Activated T-helper 2 cell treated with anti-CD3 and anti-CD28 coated beads, Interferon-gamma antibody, Interleukin-2, Interleukin-4, amounts not matched to agents 10 μg/mL and 5 μg/mL and 100 μg/mL, durations not matched to agents 14 hours and 24 hours and 36 hours (primary cell): ENCODE measurements at regions of chr6 and their contacts with region 1.

Region 1: DNA sequence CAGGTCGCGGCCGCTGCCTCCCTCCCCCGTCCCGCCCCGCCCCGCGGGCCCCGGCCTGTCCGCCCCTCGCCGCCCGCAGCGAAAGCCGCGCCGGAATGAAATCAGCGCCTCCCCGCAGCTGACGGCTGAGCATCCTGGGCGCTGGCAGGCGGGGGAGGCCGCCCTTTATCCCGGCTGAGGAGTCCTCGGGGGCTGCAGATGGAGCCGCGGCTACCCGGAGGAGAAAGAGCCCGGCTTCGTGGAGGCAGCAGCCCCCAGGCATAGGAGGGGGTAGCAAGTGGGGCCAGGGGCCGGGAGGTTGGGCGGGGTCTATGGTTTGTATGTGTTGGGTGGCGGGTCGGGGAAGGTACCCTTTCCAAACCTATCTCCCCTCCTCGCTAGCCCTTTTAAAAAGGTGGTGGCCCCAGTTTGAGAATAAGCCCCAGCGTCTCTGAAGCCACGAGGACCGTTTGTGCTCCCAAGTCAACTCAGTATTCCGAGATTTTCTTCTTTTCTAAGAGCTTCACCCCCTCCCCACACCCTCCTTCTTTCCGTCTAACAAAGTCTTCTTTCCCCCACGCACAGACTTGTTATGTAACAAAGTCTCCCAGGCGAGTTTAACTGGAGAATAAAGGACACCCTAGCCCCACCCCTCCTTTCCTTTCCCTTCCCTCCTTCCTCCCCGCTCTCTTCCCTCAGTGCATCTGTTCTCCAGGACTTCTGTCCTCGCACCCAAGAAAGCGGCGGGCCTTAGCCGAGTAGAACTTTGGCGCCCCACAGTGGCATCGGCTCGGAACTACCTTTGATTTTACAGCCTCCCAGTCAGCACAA is 11.0 kb downstream of the POU3F2 start:
- DNase-seq: peak; percentile 46
- H3K4me3 Mint-ChIP-seq: peak overlapping the region; percentile 18
- H3K27ac Mint-ChIP-seq: no peak overlapping the region
- H3K4me1 Mint-ChIP-seq: peaks cover 11% of the 10 kb centered on the region
- H3K27me3 Mint-ChIP-seq: peaks cover 83% of the 10 kb centered on the region

Region 2: DNA sequence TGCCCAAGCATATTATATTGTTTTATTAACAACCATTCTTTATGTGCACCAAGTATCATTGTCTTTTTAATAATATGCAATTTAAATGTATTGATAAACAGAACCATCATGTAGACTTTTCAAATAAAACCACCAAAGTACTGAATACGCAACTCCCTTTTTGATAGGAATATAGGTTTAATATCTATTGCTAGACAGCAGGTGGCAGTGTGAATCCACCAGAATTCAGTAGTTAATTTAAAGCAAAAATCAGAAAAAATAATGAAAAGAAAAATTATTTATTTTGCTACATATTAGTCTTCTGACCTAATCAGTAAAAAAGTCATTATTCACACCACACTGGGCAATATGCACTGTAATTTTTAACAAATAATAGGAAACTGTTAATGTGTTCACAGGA is 1777.2 kb before region 1 on chr6:
- intact Hi-C with region 1: loop called (anchors 5 kb)
- DNase-seq: no peak
- H3K4me3 Mint-ChIP-seq: no peak overlapping the region
- H3K27ac Mint-ChIP-seq: no peak overlapping the region
- H3K4me1 Mint-ChIP-seq: peaks cover 10% of the 10 kb centered on the region
- H3K27me3 Mint-ChIP-seq: no peaks in the 10 kb centered on the region

Region 3: DNA sequence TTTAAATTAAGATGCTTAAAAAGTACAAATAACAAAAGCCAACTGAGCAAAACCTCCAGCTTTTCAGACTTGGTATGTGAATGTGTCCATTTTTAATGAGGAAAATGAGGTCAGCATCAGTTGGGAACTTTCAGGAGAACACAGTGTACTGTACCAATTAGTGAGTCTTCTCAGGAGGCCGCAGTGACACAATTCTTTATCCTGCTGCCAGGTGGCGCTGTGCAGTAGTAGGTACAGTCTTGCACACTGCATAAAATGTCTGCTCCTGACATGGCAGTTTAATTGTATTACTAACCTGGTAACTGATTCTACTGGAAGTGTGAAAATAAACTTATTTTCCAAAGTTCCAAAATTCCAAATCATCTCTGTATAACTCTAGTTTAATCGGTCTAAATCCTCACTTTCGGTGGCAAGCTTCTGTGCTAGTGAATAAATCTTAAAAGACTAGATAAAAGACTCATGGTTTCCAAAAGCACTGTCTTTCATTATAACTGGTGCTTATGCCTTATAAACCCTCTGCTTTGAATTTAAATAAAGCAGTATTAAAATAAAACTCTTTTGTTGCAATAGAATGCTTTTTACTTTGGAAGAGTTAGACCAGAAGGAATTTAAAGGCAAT is 1347.6 kb before region 1 on chr6:
- intact Hi-C with region 1: loop called (anchors 1 kb)
- DNase-seq: peak; percentile 29
- H3K4me3 Mint-ChIP-seq: no peak overlapping the region
- H3K27ac Mint-ChIP-seq: no peak overlapping the region
- H3K4me1 Mint-ChIP-seq: no peaks in the 10 kb centered on the region
- H3K27me3 Mint-ChIP-seq: peaks cover 11% of the 10 kb centered on the region

Region 4: GRCh38 chr6:98834060-98835031 is 11.1 kb before region 1 on chr6 and contains the start of gene POU3F2:
- intact Hi-C with region 1: loop called (anchors 1 kb)
- DNase-seq: peak; percentile 38
- H3K4me3 Mint-ChIP-seq: peak within 1 kb of the TSS; percentile 77
- H3K27ac Mint-ChIP-seq: no peak within 1 kb of the TSS
- H3K4me1 Mint-ChIP-seq: peaks cover 30% of the 10 kb centered on the region
- H3K27me3 Mint-ChIP-seq: peaks cover 76% of the 10 kb centered on the region
- total RNA-seq, gene POU3F2: not detected in 2 replicates

Region 5: DNA sequence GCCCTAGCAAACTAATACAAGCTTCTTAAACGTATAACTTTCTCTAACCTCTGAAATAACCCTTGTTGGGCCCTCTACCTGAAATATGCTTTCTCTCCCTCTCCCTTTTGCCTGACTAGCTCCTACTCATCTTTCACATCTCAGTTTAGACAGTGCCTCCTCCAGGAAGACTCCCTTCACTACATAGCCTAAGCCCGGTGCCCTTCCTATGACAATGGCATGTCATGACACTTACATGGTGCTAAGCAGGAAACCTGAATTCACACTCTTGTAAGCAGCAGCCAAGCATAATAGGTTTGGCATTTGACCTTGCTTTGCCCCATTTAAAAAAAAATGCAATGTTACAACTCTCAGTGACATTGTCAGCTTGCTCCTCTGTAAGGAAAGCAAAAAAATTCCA is 135.4 kb after region 1 on chr6:
- intact Hi-C with region 1: no loop called
- DNase-seq: no peak
- H3K4me3 Mint-ChIP-seq: no peak overlapping the region
- H3K27ac Mint-ChIP-seq: no peak overlapping the region
- H3K4me1 Mint-ChIP-seq: peaks cover 1% of the 10 kb centered on the region
- H3K27me3 Mint-ChIP-seq: peaks cover 10% of the 10 kb centered on the region

Region 6: GRCh38 chr6:99119109-99120031 is 274.0 kb after region 1 on chr6:
- intact Hi-C with region 1: loop called (anchors 1 kb)
- DNase-seq: no peak
- H3K4me3 Mint-ChIP-seq: no peak overlapping the region
- H3K27ac Mint-ChIP-seq: no peak overlapping the region
- H3K4me1 Mint-ChIP-seq: no peaks in the 10 kb centered on the region
- H3K27me3 Mint-ChIP-seq: peaks cover 19% of the 10 kb centered on the region

Region 7: GRCh38 chr6:99349171-99350141 is 504.0 kb after region 1 on chr6 and contains the start of gene FAXC:
- intact Hi-C with region 1: loop called (anchors 10 kb)
- DNase-seq: peak; percentile 12
- H3K4me3 Mint-ChIP-seq: peak within 1 kb of the TSS; percentile 30
- H3K27ac Mint-ChIP-seq: no peak within 1 kb of the TSS
- H3K4me1 Mint-ChIP-seq: peaks cover 7% of the 10 kb centered on the region
- H3K27me3 Mint-ChIP-seq: peaks cover 62% of the 10 kb centered on the region
- total RNA-seq, gene FAXC: 0.25 TPM in 1 of 2 replicates, not detected in the other